Astrocyte of the cerebellum (primary cell): ENCODE measurements at regions of chr2 and their contacts with region 1.

Region 1: DNA sequence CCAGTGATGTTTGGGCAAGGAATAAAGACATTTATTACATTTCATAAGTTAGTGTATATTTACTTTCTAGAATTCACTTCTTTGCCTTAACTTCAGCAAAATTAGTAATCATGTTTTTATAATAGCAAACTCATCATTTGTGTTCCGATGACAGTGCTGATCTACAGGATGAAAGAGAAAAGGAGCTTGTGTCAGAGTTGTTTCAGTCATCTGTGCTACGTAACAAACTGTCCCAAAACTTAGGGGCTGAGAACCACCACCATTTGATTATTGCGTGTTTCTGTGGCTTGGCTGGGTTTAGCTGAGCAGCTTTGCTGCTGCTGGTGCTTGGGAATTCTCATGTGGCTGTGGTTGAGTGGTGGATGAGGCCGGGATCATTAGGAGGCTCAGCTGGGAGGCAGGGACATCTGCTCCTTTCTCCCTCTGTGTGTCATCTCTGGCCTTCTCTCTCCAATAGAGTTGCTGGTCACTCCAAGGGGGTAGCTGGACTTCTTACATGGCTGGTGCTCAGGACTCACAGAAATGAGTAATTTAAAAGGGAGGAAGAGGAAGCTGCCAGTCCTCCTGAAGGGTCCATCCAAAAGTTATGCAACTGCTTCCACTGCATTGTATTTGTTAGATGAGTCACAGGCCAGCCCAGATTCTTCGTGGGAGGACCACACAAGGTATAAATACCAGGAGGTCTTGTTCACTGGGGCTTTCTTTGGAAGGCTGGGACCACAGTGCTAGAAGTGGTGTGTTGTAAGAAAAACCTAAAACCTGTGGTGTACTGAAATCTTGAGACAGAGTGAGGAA is 43.4 kb upstream of the HAAO start:
- DNase-seq: peak; percentile 99
- H3K4me3 ChIP-seq: no peak overlapping the region
- CTCF ChIP-seq: no peak

Region 2: GRCh38 chr2:42895134-42895790 is 59.5 kb after region 1 on chr2:
- in situ Hi-C with region 1: loop called (anchors 5 kb)
- DNase-seq: no peak
- H3K4me3 ChIP-seq: no peak overlapping the region
- CTCF ChIP-seq: no peak

Region 3: GRCh38 chr2:43333656-43334144 is 497.9 kb after region 1 on chr2:
- in situ Hi-C with region 1: loop called (anchors 5 kb)
- DNase-seq: no peak
- H3K4me3 ChIP-seq: no peak overlapping the region
- CTCF ChIP-seq: no peak

Region 4: GRCh38 chr2:43484323-43484930 is 648.7 kb after region 1 on chr2:
- in situ Hi-C with region 1: loop called (anchors 10 kb)
- DNase-seq: peak; percentile 92
- H3K4me3 ChIP-seq: no peak overlapping the region
- CTCF ChIP-seq: peak; percentile 19